H1 (cell line): ENCODE measurements at regions of chr1 and their contacts with region 1.

Region 1: DNA sequence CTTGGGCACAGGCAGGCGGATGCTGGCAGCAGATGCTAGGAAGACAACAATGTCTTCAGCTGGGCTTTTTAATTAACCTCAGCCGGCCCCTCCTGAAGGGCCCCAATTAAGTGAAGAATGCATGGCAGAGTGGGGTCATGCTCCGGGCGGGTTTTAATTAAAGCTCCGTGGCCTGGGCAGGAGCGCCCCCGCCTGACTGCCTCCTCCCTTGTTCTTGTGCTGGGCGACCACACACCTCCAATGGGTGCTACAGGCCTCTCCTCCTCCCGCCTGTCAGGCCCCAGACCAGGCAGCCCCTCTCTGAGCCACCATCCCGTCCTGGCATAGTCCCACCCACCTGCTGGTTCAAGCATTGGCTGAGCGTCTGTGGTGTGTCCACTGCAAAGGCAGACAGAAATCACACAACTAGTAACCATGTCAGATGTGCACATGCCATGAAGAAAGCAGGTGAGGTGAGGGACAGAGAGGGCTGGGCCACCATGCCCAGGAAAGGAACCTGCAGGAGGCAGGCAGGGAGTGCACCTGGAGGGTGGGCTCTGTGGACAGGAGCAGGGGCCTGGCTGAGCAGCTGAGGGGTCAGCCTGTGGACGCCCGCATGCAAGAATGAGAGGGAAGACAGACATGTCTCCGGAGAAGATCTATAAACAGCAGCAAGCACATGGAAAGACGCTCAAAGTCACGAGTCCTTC is 8.5 kb upstream of the ARF1 start:
- DNase-seq: peak in 1 of 2 experiments; percentile 74
- H3K4me3 ChIP-seq: no peak overlapping the region
- H3K27ac ChIP-seq: no peak overlapping the region
- H3K4me1 ChIP-seq: peaks cover 0 to 14% (median 0%) of the 10 kb centered on the region in 4 experiments; a peak in 4 of 7 replicates
- H3K27me3 ChIP-seq: peaks cover 20 to 84% (median 81%) of the 10 kb centered on the region in 4 experiments
- CTCF ChIP-seq: peak; percentile 59 to 72 (median 66)
- EP300 ChIP-seq: no peak
- POLR2A ChIP-seq: no peak
- RAD21 ChIP-seq: peak; percentile 82

Region 2: DNA sequence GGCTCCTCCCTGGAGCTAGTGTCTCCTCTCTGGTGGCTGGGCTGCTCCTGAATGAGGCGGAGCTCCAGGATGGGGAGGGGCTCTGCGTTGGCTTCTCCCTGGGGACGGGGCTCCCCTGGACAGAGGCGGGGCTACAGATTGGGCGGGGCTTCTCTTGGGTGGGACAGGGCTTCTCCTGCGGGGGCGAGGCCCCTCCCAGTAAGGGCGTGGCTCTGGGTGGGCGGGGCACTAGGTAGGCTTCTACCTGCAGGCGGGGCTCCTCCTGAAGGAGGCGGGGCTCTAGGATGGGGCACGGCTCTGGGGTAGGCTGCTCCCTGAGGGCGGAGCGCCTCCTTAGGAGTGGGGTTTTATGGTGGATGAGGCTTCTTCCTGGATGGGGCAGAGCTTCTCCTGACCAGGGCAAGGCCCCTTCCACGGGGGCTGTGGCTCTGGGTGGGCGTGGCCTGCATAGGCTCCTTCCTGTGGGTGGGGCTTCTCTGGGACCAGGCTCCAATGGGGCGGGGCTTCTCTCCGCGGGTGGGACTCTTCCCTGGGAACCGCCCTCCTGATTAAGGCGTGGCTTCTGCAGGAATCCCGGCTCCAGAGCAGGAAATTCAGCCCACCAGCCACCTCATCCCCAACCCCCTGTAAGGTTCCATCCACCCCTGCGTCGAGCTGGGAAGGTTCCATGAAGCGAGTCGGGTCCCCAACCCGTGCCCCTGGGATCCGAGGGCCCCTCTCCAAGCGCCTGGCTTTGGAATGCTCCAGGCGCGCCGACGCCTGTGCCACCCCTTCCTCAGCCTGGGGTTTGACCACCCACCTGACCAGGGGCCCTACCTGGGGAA is 14.2 kb before region 1 on chr1:
- CTCF ChIA-PET with region 1: interaction called, 14 read pairs
- POLR2A ChIA-PET with region 1: interaction called, 5 read pairs
- DNase-seq: peak; percentile 88 to 100
- H3K4me3 ChIP-seq: peak overlapping the region; percentile 50 to 75 (median 69)
- H3K27ac ChIP-seq: no peak overlapping the region; the same call in 1 of the 2 replicates
- H3K4me1 ChIP-seq: peaks cover 0 to 7% (median 2%) of the 10 kb centered on the region in 4 experiments; a peak in 3 of 7 replicates
- H3K27me3 ChIP-seq: peaks cover 19 to 78% (median 65%) of the 10 kb centered on the region in 4 experiments
- CTCF ChIP-seq: no peak
- EP300 ChIP-seq: no peak
- POLR2A ChIP-seq: no peak
- RAD21 ChIP-seq: no peak

Region 3: DNA sequence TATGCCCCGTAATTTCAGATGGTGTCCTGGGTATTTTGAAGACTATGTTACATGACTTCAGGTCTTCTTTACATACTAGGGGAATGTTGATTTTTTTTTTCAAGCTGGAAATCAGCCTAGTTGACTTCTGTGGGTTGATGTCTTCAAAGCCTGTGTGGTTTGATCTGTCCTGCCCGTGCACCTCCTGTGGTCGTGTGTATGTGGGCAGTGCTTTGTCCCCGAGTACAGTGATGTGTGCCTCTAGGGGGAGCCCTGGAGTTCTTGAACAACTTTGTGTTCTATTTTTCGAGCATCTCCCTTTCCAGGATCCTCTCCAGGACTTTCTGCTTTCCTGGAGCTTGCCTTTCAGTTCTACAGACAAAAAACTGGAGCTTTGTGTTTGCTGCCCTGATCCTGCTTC is 162.7 kb after region 1 on chr1:
- CTCF ChIA-PET with region 1: no interaction called
- POLR2A ChIA-PET with region 1: no interaction called
- DNase-seq: peak in 1 of 2 experiments; percentile 87
- H3K4me3 ChIP-seq: no peak overlapping the region
- H3K27ac ChIP-seq: no peak overlapping the region
- H3K4me1 ChIP-seq: no peaks in the 10 kb centered on the region
- H3K27me3 ChIP-seq: no peaks in the 10 kb centered on the region; a peak in 1 of 7 replicates
- CTCF ChIP-seq: peak; percentile 72 to 91 (median 89)
- EP300 ChIP-seq: no peak
- POLR2A ChIP-seq: no peak
- RAD21 ChIP-seq: peak; percentile 30 to 51